CD8-positive, alpha-beta T cell (primary cell): ENCODE measurements at regions of chrX and their contacts with region 1.

Region 1: GRCh38 chrX:103254921-103255493 is at the start of gene TCEAL8:
- DNase-seq: peak; percentile 17 to 86 (median 64)
- ATAC-seq: peak; percentile 93
- H3K4me3 ChIP-seq: peak within 1 kb of the TSS; percentile 63 to 73
- H3K4me3 Mint-ChIP-seq: peak within 1 kb of the TSS; percentile 95
- H3K27ac ChIP-seq: peak within 1 kb of the TSS; percentile 81 to 86
- H3K27ac Mint-ChIP-seq: peak within 1 kb of the TSS; percentile 92
- H3K4me1 ChIP-seq: no peaks in the 10 kb centered on the region
- H3K4me1 Mint-ChIP-seq: peaks cover 34% of the 10 kb centered on the region
- H3K27me3 ChIP-seq: no peaks in the 10 kb centered on the region
- H3K27me3 Mint-ChIP-seq: no peaks in the 10 kb centered on the region
- CTCF ChIP-seq: no peak
- total RNA-seq, gene TCEAL8: 11.3 to 11.8 TPM

Region 2: DNA sequence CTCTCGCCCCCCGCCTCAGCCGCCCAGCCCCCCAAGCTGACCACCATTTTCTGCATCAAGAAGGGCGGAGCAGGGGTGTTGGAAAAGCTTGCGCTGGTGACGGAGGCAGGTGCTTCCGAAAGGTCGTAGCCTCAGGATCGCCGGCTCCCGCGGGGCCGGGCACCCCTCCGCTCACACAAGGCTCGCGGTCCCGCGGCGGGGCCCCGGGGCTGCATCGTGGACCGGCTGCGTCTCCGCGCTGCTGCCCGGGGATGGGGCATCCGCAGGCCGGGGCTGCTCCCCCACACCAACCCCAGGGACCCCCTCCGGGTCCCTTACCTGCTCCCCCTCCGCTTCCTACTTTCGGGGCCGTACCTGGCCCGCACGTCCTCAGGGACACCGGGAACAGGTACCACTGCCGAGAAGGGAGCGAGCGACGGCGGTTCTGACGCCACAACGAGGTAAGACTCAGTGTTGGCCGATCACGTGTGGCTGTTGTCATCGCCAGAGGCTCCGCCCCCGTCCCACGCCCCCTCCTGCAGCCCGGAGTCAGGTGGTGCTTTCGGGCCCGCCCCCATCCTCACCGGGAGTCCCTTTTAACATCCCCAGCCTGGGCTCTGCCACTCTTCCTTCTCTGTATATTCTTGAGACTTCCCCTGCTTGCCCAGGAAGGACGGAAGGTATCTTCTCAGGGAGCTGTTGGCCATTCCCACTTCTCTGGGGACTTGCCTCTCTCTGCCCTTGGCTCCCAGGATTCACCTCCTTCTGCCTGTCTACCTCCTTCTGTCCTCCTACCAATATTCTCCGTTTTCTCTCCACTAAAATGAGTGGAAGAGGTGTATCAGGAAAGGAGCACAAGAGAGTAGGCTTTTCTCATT is 55.8 kb after region 1 on chrX and contains the start of gene BEX2:
- CTCF ChIA-PET with region 1: no interaction called
- POLR2A ChIA-PET with region 1: no interaction called
- intact Hi-C with region 1: loop called (anchors 2 to 5 kb)
- DNase-seq: peak; percentile 70 to 91 (median 82)
- ATAC-seq: peak; percentile 98
- H3K4me3 ChIP-seq: peak within 1 kb of the TSS; percentile 55 to 84
- H3K4me3 Mint-ChIP-seq: peak within 1 kb of the TSS; percentile 85
- H3K27ac ChIP-seq: peak within 1 kb of the TSS; percentile 69 to 91
- H3K27ac Mint-ChIP-seq: peak within 1 kb of the TSS; percentile 86
- H3K4me1 ChIP-seq: no peaks in the 10 kb centered on the region
- H3K4me1 Mint-ChIP-seq: peaks cover 8% of the 10 kb centered on the region
- H3K27me3 ChIP-seq: no peaks in the 10 kb centered on the region
- H3K27me3 Mint-ChIP-seq: no peaks in the 10 kb centered on the region
- CTCF ChIP-seq: no peak
- total RNA-seq, gene BEX2: 57.6 to 59.3 TPM

Region 3: GRCh38 chrX:103475381-103475780 is 220.4 kb after region 1 on chrX:
- CTCF ChIA-PET with region 1: no interaction called
- POLR2A ChIA-PET with region 1: no interaction called
- intact Hi-C with region 1: no loop called
- DNase-seq: no peak
- ATAC-seq: no peak
- H3K4me3 ChIP-seq: no peak overlapping the region
- H3K4me3 Mint-ChIP-seq: no peak overlapping the region
- H3K27ac ChIP-seq: no peak overlapping the region
- H3K27ac Mint-ChIP-seq: no peak overlapping the region
- H3K4me1 ChIP-seq: no peaks in the 10 kb centered on the region
- H3K4me1 Mint-ChIP-seq: no peaks in the 10 kb centered on the region
- H3K27me3 ChIP-seq: no peaks in the 10 kb centered on the region
- H3K27me3 Mint-ChIP-seq: no peaks in the 10 kb centered on the region
- CTCF ChIP-seq: no peak